Thyroid gland (tissue), 4 donors: ENCODE measurements at regions of chr1 and their contacts with region 1.

Region 1: DNA sequence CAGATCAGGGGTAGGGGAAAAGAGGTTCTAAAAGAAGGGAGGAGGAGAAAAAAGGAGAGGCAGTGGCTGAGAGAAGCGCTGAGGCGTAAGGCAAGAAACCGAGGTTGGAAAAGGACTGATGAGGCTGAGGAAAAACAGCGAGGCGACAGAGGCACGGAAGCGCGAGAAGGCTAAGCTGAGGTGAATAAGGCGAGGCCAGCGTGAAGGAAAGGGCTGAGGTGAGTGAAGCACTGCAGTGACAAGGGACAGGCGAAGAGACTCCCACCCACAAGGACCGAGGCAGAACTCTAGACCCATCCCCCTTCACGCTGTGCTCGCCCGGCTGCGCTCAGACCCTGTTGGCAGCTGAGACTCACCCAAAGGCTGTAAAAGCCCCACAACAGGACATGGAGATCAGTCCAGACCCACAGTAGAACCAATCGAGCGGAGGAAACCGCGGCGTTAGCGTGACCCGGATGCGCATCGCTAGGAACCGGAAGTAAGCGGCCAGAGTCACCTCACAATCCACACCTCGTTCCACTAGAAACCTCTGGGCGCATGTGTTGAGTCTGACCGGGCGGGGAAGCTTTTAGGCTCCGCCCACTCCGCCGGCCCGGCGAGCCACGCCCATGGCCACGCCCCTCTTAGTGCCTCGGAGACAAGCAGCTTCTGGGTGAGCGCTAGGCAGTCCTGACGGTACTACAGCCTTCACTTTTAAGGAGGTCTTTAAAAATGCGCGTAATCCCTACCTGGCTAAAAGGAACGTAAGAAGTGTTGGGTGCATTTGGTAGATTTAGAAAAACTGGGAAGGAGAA is at the start of gene EYA3:
- DNase-seq: peak; percentile 98
- H3K4me3 ChIP-seq: peak within 1 kb of the TSS; percentile 3 to 80 (median 19)
- H3K27ac ChIP-seq: peak within 1 kb of the TSS; percentile 27 to 83 (median 67)
- H3K4me1 ChIP-seq: peaks cover 29 to 38% of the 10 kb centered on the region in 2 donors
- H3K27me3 ChIP-seq: no peaks in the 10 kb centered on the region
- CTCF ChIP-seq: peak in 1 of 6 experiments; percentile 19
- POLR2A ChIP-seq: peak; percentile 33 to 89
- total RNA-seq, gene EYA3: 19.3 to 27.7 (median 20.0) TPM

Region 2: DNA sequence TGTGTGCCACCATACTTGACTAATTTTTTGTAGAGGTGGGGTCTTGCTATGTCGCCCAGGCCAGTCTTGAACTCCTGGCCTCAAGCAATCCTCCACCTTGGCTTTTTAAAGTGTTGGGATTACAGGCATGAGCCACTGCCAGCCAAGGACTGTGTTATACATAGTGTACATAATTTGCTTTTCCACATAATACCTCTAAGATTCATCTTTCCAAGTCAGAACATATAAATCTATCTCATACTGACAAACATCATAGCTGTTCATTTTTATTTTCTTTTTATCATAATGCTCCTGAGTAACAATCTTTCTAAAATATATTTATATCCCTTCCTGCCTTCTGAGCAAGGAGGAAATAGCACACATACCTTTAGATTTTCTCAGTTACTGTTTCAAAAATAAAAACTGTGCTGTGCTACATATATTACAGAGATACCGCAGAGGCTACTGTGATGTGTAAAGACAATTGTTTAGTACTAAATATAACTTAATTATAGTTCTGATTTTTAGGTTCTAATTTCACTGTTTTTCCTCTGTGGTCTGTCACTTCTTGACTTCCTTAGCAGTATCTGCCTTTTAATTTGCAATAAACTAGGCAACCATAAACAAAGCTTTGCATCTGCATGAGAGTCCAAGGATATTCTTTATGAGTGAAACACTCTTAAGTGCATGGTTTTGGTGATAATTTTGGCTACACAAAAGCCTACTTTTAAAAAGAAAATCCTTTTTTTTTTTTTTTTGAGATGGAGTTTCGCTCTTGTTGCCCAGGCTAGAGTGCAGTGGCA is 59.3 kb before region 1 on chr1:
- intact Hi-C with region 1: loop called (anchors 10 kb)
- DNase-seq: no peak
- H3K4me3 ChIP-seq: no peak overlapping the region
- H3K27ac ChIP-seq: peak overlapping the region in 2 of 3 donors; percentile 9 to 58
- H3K4me1 ChIP-seq: peaks cover 0 to 20% of the 10 kb centered on the region in 2 donors
- H3K27me3 ChIP-seq: no peaks in the 10 kb centered on the region
- CTCF ChIP-seq: no peak
- POLR2A ChIP-seq: no peak

Region 3: DNA sequence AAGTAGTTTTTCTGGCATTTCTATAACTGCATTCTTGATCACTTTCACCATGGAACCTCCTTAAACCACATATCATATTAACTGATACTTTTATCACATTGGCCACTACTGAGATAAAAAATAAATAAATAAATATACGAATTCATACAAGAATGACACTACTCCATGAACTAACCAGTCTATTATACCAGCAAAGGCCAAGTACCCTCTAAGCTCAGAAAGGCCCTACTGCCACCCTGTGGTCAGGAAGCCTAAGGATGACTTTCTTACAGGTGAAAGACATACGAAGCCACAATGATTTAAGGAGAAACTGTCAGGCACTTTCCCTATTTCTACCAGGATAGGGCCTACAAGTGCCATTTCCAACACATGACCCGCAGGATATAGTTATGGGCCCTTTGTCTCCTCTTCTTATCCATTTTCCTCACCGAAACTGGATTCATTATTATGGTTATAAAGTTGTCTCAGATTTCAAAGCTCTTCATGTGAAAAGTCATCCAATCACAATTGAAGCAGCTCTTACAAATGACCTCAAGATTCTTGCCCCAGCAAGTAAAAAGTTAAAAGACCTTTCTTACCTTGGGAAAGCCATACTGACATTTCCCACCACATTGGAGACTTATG is 120.6 kb after region 1 on chr1:
- intact Hi-C with region 1: loop called (anchors 5 kb)
- DNase-seq: peak; percentile 71 to 73
- H3K4me3 ChIP-seq: no peak overlapping the region
- H3K27ac ChIP-seq: no peak overlapping the region
- H3K4me1 ChIP-seq: no peaks in the 10 kb centered on the region
- H3K27me3 ChIP-seq: no peaks in the 10 kb centered on the region
- CTCF ChIP-seq: peak; percentile 31 to 90 (median 72)
- POLR2A ChIP-seq: no peak